Tibial artery (tissue), 4 donors: ENCODE measurements at regions of chr4 and their contacts with region 1.

Region 1: DNA sequence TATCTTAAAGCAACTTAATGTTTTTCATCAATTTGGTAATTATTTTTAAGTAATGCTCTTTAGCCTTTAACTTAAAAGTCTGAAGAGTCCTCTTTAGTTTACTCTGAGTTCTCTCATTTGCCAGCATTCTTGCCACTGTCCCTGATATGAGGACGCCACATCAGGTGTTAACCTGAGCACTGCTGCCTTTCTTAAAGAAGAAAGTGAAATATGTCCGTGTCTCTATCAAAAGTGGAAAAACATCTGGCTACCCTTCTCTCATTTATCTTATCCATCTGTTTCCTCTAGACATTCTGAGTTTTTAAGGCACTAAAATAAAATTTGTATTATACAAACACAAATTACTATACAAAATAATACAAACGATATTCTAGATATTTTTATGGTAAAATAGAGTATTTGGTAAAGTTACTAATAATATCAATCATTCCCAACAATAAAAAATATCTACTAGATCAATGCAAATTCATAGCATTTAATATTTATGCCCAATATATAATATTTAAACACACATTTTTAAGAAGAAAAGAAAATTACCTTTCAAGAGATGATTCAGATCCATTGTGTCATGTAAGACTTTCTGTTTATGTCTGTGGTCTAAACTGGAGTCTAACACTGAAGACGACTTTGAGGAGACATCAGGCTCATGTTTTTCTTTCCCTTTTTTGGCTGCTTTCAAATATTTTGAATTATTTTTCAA is 14.0 kb downstream of the CFAP97 start:
- DNase-seq: no peak
- H3K4me3 ChIP-seq: no peak overlapping the region
- H3K27ac ChIP-seq: no peak overlapping the region
- H3K4me1 ChIP-seq: peaks cover 0 to 9% (median 2%) of the 10 kb centered on the region in 4 donors
- H3K27me3 ChIP-seq: no peaks in the 10 kb centered on the region
- CTCF ChIP-seq: no peak

Region 2: DNA sequence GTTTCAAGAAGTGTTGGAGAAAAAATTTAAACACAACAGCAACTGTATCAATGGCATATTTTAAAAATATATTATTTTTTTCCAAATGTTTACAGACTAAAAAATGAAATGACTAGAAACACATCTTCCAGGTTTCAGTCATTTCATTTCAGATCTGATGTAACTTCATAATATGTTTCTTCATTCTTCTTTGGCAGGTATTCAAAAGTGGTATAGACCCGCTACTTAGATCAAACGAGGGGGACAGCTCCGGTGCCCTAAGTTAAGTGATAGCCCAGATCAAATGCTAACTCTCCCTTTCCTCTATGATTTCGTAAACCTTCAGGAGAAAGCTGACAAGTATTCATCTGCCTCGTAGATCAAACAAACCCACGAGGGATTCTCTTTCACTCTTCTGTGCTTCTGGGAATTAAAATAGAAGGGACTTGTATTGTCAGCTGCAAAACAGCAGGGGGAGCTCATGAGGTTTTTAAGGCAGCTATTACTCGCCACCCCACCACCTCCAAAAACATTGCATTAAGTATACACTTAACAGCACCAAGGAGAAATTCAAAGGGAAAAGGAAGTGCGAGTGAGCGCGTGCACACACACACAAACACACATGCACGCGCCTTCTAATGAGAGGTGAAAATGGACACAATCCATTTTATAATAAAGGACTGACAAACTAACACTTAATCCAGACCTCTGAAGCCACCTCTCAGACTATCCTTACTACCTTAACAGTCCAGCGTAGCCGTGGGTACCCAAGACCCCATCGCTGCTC is 150.1 kb before region 1 on chr4:
- intact Hi-C with region 1: loop called (anchors 5 kb)
- DNase-seq: peak in 1 of 2 donors; percentile 41
- H3K4me3 ChIP-seq: no peak overlapping the region
- H3K27ac ChIP-seq: no peak overlapping the region
- H3K4me1 ChIP-seq: no peaks in the 10 kb centered on the region
- H3K27me3 ChIP-seq: no peaks in the 10 kb centered on the region
- CTCF ChIP-seq: peak; percentile 80 to 83